ENCODE measurements at regions of chr14 and their contacts with region 1.

Region 1: GRCh38 chr14:88562831-88563686 is at the start of gene ZC3H14:
- DNase-seq: peak; percentile 93
- H3K4me3 ChIP-seq: peak within 1 kb of the TSS; percentile 77 to 96 (median 86)
- H3K27ac ChIP-seq: peak within 1 kb of the TSS; percentile 72
- H3K4me1 ChIP-seq: peaks cover 14% of the 10 kb centered on the region
- H3K27me3 ChIP-seq: no peaks in the 10 kb centered on the region
- CTCF ChIP-seq: no peak
- POLR2A ChIP-seq: peak; percentile 83
- total RNA-seq, gene ZC3H14: 59.6 and 61.8 TPM in 2 replicates

Region 2: DNA sequence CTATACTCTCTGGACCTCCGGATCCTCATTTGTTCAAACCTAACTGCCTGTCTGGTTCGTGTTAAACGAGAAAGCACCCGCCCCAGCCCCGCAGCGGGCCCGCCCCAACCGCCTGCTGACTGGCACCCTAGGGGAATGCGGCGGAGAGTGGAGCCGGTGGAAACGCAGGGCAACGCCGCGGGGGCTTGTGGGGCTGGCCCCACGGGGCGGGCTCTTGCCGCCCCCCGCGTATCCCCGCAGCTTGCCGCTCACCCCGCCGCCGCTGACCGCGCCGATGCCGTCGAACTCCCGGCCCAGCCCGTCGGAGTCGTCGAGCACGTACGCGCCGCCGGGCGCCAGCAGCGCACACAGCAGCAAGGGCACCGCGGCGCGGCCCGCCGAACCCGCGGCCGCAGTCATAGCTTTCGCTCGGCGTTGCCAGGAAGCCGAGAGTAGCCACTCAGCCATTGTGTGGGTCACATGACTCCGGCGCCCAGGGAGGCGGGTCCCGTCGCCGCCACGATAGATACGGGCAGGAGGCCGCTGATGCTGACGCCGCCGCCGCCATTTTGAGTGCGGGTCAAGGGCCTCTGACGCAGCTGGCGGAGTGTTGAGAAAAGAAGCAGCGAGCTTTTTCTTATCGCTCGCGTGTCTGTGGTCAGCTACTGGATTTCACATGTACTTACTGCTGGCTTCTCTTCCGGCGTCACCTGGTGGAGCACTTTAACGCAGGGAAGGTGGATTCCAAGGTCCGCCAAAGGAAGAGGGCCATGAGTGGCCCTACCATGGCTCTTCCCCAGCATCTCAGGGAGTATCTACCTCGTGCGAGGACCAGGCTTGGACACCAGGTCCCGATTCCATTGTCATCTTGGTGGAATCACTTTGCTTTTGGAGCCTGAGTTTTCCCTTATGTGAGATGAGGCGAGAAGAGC is 570.1 kb before region 1 on chr14 and contains the start of gene GALC:
- CTCF ChIA-PET with region 1: no interaction called
- POLR2A ChIA-PET with region 1: no interaction called
- dilution Hi-C with region 1: no loop called
- intact Hi-C with region 1: loop called (anchors 5 kb)
- DNase-seq: peak; percentile 94
- H3K4me3 ChIP-seq: peak within 1 kb of the TSS; percentile 73 to 82 (median 74)
- H3K27ac ChIP-seq: peak within 1 kb of the TSS; percentile 58
- H3K4me1 ChIP-seq: peaks cover 12% of the 10 kb centered on the region
- H3K27me3 ChIP-seq: no peaks in the 10 kb centered on the region
- CTCF ChIP-seq: no peak
- POLR2A ChIP-seq: peak; percentile 76
- total RNA-seq, gene GALC: 14.2 and 15.0 TPM in 2 replicates

Region 3: GRCh38 chr14:88492272-88493089 is 70.6 kb before region 1 on chr14:
- CTCF ChIA-PET with region 1: interaction called, 30 read pairs
- POLR2A ChIA-PET with region 1: no interaction called
- dilution Hi-C with region 1: no loop called
- intact Hi-C with region 1: loop called (anchors 1 kb)
- DNase-seq: peak; percentile 72
- H3K4me3 ChIP-seq: no peak overlapping the region
- H3K27ac ChIP-seq: no peak overlapping the region
- H3K4me1 ChIP-seq: no peaks in the 10 kb centered on the region
- H3K27me3 ChIP-seq: no peaks in the 10 kb centered on the region
- CTCF ChIP-seq: peak; percentile 72 to 79
- POLR2A ChIP-seq: no peak

Region 4: DNA sequence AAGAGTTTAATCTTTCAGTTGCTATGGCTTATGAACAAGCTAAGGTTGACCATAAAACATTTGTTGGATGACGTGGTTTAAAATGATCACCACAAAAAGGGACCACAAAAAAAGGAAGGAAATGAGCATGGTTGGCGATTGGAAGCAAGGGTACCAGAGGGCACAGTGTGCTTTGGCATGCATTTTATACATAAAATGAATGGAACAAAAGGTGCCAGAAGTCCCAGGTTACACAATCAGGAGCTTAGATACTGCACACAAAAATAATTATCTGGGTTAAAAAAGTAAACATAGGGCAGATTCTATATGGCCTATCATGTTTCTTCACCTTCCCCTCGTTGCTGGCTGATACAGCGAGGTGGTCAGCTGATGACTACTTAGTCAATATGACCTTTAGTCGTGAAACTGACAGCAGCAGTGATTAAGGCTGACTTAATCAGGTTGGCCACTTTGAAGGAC is 50.5 kb after region 1 on chr14:
- CTCF ChIA-PET with region 1: no interaction called
- POLR2A ChIA-PET with region 1: no interaction called
- dilution Hi-C with region 1: no loop called
- intact Hi-C with region 1: loop called (anchors 5 kb)
- DNase-seq: peak; percentile 81
- H3K4me3 ChIP-seq: no peak overlapping the region
- H3K27ac ChIP-seq: peak overlapping the region; percentile 78
- H3K4me1 ChIP-seq: peaks cover 39% of the 10 kb centered on the region
- H3K27me3 ChIP-seq: no peaks in the 10 kb centered on the region
- CTCF ChIP-seq: no peak
- POLR2A ChIP-seq: no peak

Measured in endothelial cell of umbilical vein (primary cell).